ENCODE measurements at regions of chr17 and their contacts with region 1.

Region 1: GRCh38 chr17:81101614-81102306 is 63.5 kb upstream of the PVALEF start:
- DNase-seq: no peak
- H3K4me3 ChIP-seq: no peak overlapping the region
- CTCF ChIP-seq: peak; percentile 100

Region 2: DNA sequence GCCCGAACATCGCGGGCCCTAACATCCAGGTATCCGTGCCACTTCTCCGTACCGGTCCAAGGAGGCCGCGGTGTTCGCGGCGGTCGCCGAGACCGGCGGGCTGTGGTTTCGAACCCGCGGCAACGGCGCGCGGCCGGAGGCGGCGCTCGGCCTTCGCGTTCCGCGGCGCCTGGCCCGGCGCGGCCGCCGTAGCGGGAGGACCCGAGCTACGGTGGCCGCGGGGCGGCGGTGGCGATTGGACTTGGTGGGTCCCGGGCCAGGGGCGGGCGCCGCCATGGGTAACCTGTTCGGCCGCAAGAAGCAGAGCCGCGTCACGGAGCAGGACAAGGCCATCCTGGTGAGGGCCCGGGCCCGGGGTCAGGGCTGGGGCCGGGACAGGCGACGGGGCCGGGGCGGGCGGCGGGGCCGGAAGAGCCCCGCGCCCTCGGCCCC is 110.1 kb before region 1 on chr17 and contains the start of gene CHMP6:
- CTCF ChIA-PET with region 1: interaction called, 135 read pairs
- POLR2A ChIA-PET with region 1: no interaction called
- DNase-seq: no peak
- H3K4me3 ChIP-seq: peak within 1 kb of the TSS; percentile 70
- CTCF ChIP-seq: no peak

Region 3: GRCh38 chr17:81018044-81018802 is 83.5 kb before region 1 on chr17:
- CTCF ChIA-PET with region 1: interaction called, 178 read pairs
- POLR2A ChIA-PET with region 1: no interaction called
- DNase-seq: no peak
- H3K4me3 ChIP-seq: peak overlapping the region; percentile 19
- CTCF ChIP-seq: no peak

Region 4: GRCh38 chr17:81034779-81035388 is 66.9 kb before region 1 on chr17 and contains the start of gene BAIAP2:
- CTCF ChIA-PET with region 1: interaction called, 35 read pairs
- POLR2A ChIA-PET with region 1: interaction called, 5 read pairs
- DNase-seq: no peak
- H3K4me3 ChIP-seq: peak within 1 kb of the TSS; percentile 78
- CTCF ChIP-seq: no peak

Region 5: DNA sequence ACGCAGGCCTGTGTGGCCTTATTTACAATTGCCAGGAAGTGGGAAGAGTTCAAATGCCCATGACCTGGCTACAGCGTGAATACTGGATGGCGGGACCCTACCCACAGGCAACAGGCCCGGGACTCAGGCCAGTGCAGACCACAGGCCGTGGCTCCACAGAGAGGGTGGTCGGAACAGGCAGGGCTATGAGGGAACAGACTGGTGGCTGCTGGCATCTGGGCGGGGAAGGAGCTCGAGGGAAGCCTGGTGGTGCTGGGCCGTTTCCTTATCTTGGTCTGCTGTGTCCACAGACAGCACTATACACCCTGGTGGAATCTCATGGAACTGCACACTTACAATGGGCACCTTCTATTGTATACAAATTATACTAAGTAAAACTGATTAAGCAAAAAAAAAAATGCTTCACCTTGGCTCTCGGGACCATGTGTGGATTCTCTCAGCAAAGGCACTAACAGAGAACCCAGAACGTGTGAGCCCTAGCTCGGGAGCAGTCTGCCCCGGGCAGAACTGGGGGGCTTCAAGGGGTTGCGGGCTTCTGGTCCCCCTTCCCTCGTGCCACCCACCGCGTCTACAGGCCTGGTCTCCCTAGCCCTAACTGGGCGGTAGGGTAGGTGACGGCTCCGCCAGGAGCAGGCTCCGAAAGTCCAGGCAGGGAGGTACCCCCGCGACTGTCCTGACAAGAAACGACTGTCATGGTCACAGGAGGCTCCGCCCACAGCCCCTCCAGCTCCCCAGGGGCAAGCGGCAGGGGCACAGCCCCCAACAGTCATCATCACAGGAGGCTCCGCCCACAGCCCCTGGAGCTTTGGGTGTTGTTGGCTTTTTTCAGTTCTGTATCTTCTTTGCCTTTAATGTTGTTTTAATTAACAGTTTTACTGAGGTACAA is 99.2 kb after region 1 on chr17:
- CTCF ChIA-PET with region 1: interaction called, 10 read pairs
- POLR2A ChIA-PET with region 1: no interaction called
- DNase-seq: peak; percentile 14
- H3K4me3 ChIP-seq: no peak overlapping the region
- CTCF ChIP-seq: peak; percentile 47